ENCODE measurements at regions of chr15 and their contacts with region 1.

Region 1: DNA sequence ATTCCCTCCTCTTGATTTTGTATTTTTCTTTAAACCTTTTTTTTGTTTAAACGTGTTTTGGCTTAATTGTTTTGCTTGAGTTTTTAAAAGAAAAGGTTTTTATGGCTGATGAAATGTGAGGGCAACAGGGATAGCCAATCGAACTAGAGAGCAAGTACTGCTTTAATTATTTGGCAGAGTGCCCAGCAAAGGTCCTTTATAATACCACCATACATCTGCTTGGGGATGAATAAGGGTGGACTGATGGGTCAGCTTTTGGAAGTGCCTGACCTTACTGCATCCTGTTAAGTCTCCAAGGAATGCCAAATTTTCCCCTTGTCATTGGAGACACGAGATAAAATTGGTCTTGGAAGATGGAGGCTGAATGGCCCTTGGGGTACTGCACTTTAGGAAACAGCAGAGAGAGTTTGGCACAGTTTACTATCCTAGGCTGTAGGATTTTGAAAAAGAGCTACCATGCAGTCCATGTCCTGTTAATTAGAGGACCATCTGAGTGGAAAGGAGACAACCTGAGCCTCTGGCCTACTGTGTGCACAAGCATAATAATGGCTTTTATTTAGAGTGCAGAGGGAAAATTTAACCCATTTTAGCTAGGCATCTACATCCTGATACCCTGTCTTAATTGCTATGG is 19.8 kb upstream of the MTHFS start:
- DNase-seq: no peak
- ATAC-seq: no peak
- H3K4me3 ChIP-seq: no peak overlapping the region
- H3K4me3 Mint-ChIP-seq: no peak overlapping the region
- H3K27ac ChIP-seq: no peak overlapping the region
- H3K27ac Mint-ChIP-seq: no peak overlapping the region
- H3K4me1 ChIP-seq: no peaks in the 10 kb centered on the region
- H3K4me1 Mint-ChIP-seq: peaks cover 4% of the 10 kb centered on the region
- H3K27me3 ChIP-seq: no peaks in the 10 kb centered on the region
- H3K27me3 Mint-ChIP-seq: no peaks in the 10 kb centered on the region
- CTCF ChIP-seq: no peak

Region 2: DNA sequence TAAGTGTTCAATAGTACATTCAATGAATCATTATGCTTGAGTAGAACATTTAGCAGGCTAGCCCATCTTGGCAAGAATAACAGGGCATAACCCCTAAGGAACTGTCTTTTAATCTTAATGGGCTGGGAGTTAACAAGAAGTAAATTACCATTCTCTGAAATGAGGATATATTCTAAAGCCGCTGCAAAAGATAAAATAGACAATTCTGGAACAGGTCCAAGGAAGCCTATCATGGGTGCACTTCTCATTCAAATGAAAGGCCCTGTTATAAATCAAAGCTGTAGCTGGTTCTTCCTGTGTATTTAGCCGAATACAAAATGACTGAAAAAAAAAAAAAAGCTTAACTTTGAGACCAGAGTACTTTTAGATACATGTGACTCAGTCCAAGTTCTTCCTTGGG is 35.4 kb before region 1 on chr15:
- CTCF ChIA-PET with region 1: no interaction called
- POLR2A ChIA-PET with region 1: no interaction called
- intact Hi-C with region 1: no loop called
- DNase-seq: no peak
- ATAC-seq: no peak
- H3K4me3 ChIP-seq: no peak overlapping the region
- H3K4me3 Mint-ChIP-seq: no peak overlapping the region
- H3K27ac ChIP-seq: no peak overlapping the region
- H3K27ac Mint-ChIP-seq: no peak overlapping the region
- H3K4me1 ChIP-seq: no peaks in the 10 kb centered on the region
- H3K4me1 Mint-ChIP-seq: no peaks in the 10 kb centered on the region
- H3K27me3 ChIP-seq: no peaks in the 10 kb centered on the region
- H3K27me3 Mint-ChIP-seq: no peaks in the 10 kb centered on the region
- CTCF ChIP-seq: no peak

Region 3: GRCh38 chr15:79948095-79948695 is 31.6 kb after region 1 on chr15:
- CTCF ChIA-PET with region 1: interaction called, 4 read pairs
- POLR2A ChIA-PET with region 1: no interaction called
- intact Hi-C with region 1: loop called (anchors 5 kb)
- DNase-seq: no peak
- ATAC-seq: peak; percentile 41
- H3K4me3 ChIP-seq: no peak overlapping the region
- H3K4me3 Mint-ChIP-seq: no peak overlapping the region
- H3K27ac ChIP-seq: no peak overlapping the region
- H3K27ac Mint-ChIP-seq: no peak overlapping the region
- H3K4me1 ChIP-seq: peaks cover 0 to 4% of the 10 kb centered on the region in 2 donors
- H3K4me1 Mint-ChIP-seq: peaks cover 9% of the 10 kb centered on the region
- H3K27me3 ChIP-seq: no peaks in the 10 kb centered on the region
- H3K27me3 Mint-ChIP-seq: no peaks in the 10 kb centered on the region
- CTCF ChIP-seq: no peak

Region 4: GRCh38 chr15:79970624-79971434 is 54.2 kb after region 1 on chr15 and contains the start of gene BCL2A1:
- CTCF ChIA-PET with region 1: no interaction called
- POLR2A ChIA-PET with region 1: no interaction called
- intact Hi-C with region 1: no loop called
- DNase-seq: peak; percentile 92
- ATAC-seq: peak; percentile 85
- H3K4me3 ChIP-seq: peak within 1 kb of the TSS; percentile 33 to 88 (median 57)
- H3K4me3 Mint-ChIP-seq: peak within 1 kb of the TSS; percentile 91
- H3K27ac ChIP-seq: peak within 1 kb of the TSS; percentile 75 to 79
- H3K27ac Mint-ChIP-seq: peak within 1 kb of the TSS; percentile 90
- H3K4me1 ChIP-seq: peaks cover 53 to 64% of the 10 kb centered on the region in 2 donors
- H3K4me1 Mint-ChIP-seq: peaks cover 60% of the 10 kb centered on the region
- H3K27me3 ChIP-seq: no peaks in the 10 kb centered on the region
- H3K27me3 Mint-ChIP-seq: no peaks in the 10 kb centered on the region
- CTCF ChIP-seq: no peak
- total RNA-seq, gene BCL2A1: 32.9 and 33.8 TPM in 2 replicates